ENCODE measurements at regions of chr1 and their contacts with region 1.

Region 1: GRCh38 chr1:211698161-211699026 is 23.0 kb upstream of the NEK2 start:
- DNase-seq: peak; percentile 77
- H3K4me3 ChIP-seq: no peak overlapping the region
- H3K27ac ChIP-seq: no peak overlapping the region
- H3K4me1 ChIP-seq: peaks cover 15% of the 10 kb centered on the region
- H3K27me3 ChIP-seq: no peaks in the 10 kb centered on the region
- CTCF ChIP-seq: peak; percentile 99

Region 2: GRCh38 chr1:211830330-211831142 is 132.1 kb after region 1 on chr1 and contains the start of gene LPGAT1:
- CTCF ChIA-PET with region 1: no interaction called
- POLR2A ChIA-PET with region 1: no interaction called
- intact Hi-C with region 1: loop called (anchors 2 kb)
- DNase-seq: peak; percentile 85
- H3K4me3 ChIP-seq: peak within 1 kb of the TSS; percentile 93
- H3K27ac ChIP-seq: peak within 1 kb of the TSS; percentile 93
- H3K4me1 ChIP-seq: peaks cover 4% of the 10 kb centered on the region
- H3K27me3 ChIP-seq: no peaks in the 10 kb centered on the region
- CTCF ChIP-seq: peak; percentile 69
- total RNA-seq, gene LPGAT1: 34.4 and 37.5 TPM in 2 replicates

Region 3: GRCh38 chr1:211885747-211886522 is 187.5 kb after region 1 on chr1:
- CTCF ChIA-PET with region 1: no interaction called
- POLR2A ChIA-PET with region 1: no interaction called
- intact Hi-C with region 1: no loop called
- DNase-seq: no peak
- H3K4me3 ChIP-seq: no peak overlapping the region
- H3K27ac ChIP-seq: no peak overlapping the region
- H3K4me1 ChIP-seq: no peaks in the 10 kb centered on the region
- H3K27me3 ChIP-seq: no peaks in the 10 kb centered on the region
- CTCF ChIP-seq: no peak

Region 4: DNA sequence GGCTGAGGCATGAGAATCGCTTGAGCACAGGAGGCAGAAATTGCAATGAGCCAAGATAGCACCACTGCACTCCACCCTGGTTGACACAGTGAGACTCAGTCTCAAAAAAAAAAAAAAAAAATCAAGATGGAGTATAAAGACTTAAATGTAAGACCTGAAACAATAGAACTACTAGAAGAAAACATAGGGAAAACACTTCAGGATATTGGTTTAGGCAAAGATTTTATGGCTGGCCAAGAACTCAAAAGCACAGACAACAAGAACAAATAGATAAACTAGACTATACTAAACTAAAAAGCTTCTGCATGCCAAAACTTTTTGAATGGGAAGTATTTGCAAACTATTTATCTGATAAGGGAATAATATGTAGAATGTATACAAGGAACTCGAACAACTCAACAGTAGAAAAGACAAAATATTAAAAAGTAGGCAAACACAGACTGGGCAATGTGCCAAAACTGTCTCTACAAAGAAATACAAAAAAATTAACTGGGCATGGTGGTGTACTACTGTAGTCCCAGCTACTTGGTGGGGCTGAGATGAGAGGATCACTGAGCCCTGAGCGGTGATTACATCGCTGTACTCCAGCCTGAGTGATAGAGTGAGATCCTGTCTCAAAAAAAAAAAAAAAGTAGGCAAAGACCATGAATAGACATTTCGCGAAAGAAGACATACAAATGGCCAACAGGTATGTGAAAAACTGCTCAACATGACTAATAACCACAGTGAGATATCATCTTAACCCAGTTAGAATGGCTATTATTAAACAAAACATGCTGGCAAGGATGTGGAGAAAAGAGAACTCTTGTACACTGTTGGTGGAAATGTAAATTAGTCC is 362.5 kb after region 1 on chr1:
- CTCF ChIA-PET with region 1: no interaction called
- POLR2A ChIA-PET with region 1: no interaction called
- intact Hi-C with region 1: no loop called
- DNase-seq: no peak
- H3K4me3 ChIP-seq: no peak overlapping the region
- H3K27ac ChIP-seq: no peak overlapping the region
- H3K4me1 ChIP-seq: no peaks in the 10 kb centered on the region
- H3K27me3 ChIP-seq: no peaks in the 10 kb centered on the region
- CTCF ChIP-seq: no peak

Measured in A673 (cell line).